ENCODE measurements at regions of chr21 and their contacts with region 1.

Region 1: DNA sequence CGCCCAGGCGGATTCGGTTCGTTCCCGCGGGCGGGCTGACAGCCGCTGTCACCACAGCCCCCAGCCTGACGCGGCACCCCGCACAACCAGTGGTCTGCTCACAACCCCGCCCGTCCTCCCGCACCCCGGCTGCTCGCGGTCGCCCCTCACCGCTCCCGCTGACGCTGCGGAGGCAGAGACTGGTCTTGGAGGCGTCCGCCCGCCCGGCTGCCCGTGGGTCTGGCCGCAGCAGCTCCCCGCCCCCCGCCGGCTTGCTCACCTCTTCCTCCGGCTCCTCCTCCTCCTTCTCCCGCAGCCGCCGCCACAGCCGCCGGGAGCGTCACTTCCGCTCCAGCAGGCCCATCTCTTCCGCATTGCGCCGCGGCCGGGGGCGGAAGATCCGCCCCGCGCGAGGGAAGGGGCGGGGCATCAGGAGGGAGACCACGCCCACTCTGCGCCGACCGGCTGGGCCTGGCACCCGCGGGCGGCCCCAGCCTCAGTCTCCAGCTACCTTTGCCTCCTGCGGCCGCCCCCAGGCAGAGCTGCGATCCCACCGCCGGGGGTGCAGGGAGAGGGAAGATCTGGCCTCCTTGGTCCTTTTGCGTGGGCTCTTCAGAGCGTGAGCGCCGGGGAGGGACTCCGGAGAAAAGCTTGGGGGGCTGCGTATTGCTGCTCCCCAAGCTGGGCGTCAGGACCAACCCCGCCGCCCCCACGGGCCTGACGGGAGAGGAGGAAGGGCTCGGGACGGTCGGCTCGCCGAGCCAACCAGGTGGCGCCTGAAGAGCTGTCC is at the start of gene SYNJ1:
- DNase-seq: peak; percentile 75 to 98
- H3K4me3 ChIP-seq: peak within 1 kb of the TSS; percentile 87 to 96
- H3K27ac ChIP-seq: peak within 1 kb of the TSS; percentile 90 to 93
- H3K4me1 ChIP-seq: peaks cover 5 to 22% of the 10 kb centered on the region in 2 donors
- H3K27me3 ChIP-seq: no peaks in the 10 kb centered on the region
- CTCF ChIP-seq: no peak
- total RNA-seq, gene SYNJ1: 12.1 TPM

Region 2: DNA sequence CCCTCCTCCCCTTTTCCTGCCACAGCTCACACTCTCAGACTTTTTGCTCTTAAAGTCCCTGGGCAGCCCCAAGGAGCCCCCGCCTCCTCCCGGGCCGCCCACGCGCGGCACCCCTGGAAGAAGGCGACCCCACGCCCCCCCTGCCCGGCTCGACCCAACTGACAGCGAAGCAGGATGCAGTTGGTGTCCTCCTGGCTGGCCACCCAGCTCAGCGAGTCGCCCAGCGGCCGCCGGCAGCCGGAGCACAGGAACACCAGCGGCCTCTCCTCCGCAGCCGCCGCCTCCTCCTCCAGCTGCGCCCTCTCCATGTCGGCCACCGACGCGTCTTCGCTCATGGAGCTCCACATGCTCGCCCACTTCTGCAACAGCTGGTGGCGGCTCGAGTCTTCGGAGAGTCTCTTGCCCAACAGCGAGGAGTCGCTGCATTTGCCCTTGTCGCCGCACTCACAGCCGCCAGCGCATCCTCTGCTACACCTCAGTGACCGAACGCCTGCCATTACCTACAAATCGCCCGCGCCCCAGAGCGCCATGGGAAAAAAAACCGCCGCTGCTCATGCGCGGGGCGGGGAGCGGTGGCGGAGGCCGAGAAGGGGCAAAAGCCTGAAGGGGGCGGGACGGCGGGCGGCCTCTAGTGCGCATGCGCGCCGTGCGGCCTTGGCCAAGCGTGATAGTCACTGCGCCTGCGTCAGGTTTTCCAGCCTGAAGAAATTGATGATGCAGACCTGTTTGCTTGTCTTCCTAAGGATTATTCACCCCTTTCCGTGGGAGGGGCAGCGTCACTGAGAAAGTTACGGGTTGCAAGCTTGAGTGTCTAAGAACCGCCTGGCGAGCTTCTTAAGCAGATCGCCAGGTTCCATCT is 449.1 kb before region 1 on chr21 and contains the start of gene MIS18A:
- intact Hi-C with region 1: loop called (anchors 5 kb)
- DNase-seq: peak; percentile 80 to 98
- H3K4me3 ChIP-seq: peak within 1 kb of the TSS; percentile 69 to 77
- H3K27ac ChIP-seq: peak within 1 kb of the TSS; percentile 44 to 65
- H3K4me1 ChIP-seq: peaks cover 9 to 13% of the 10 kb centered on the region in 2 donors
- H3K27me3 ChIP-seq: no peaks in the 10 kb centered on the region
- CTCF ChIP-seq: peak in 1 of 3 experiments; percentile 6
- total RNA-seq, gene MIS18A: 0.64 TPM

Region 3: GRCh38 chr21:32612075-32612998 is 115.5 kb before region 1 on chr21 and contains the start of gene CFAP298:
- intact Hi-C with region 1: loop called (anchors 5 kb)
- DNase-seq: peak; percentile 37 to 93
- H3K4me3 ChIP-seq: peak within 1 kb of the TSS; percentile 73 to 83
- H3K27ac ChIP-seq: peak within 1 kb of the TSS; percentile 83 to 86
- H3K4me1 ChIP-seq: peaks cover 0 to 11% of the 10 kb centered on the region in 2 donors
- H3K27me3 ChIP-seq: no peaks in the 10 kb centered on the region
- CTCF ChIP-seq: no peak
- total RNA-seq, gene CFAP298: 18.3 TPM

Region 4: GRCh38 chr21:33266050-33266788 is 538.3 kb after region 1 on chr21 and contains the start of gene IL10RB:
- intact Hi-C with region 1: loop called (anchors 5 kb)
- DNase-seq: peak in 1 of 2 donors; percentile 85
- H3K4me3 ChIP-seq: peak within 1 kb of the TSS; percentile 76 to 89
- H3K27ac ChIP-seq: peak within 1 kb of the TSS; percentile 84
- H3K4me1 ChIP-seq: peaks cover 0 to 10% of the 10 kb centered on the region in 2 donors
- H3K27me3 ChIP-seq: no peaks in the 10 kb centered on the region
- CTCF ChIP-seq: no peak
- total RNA-seq, gene IL10RB: 39.1 TPM